Brain microvascular endothelial cell (primary cell): ENCODE measurements at regions of chr9 and their contacts with region 1.

Region 1: GRCh38 chr9:14096258-14096922 is 217.6 kb downstream of the NFIB start:
- DNase-seq: peak; percentile 90
- H3K4me3 ChIP-seq: peak overlapping the region; percentile 12
- H3K27ac ChIP-seq: peak overlapping the region; percentile 94
- H3K27me3 ChIP-seq: no peaks in the 10 kb centered on the region
- CTCF ChIP-seq: peak; percentile 20

Region 2: GRCh38 chr9:14018081-14018480 is 78.3 kb before region 1 on chr9:
- in situ Hi-C with region 1: no loop called
- DNase-seq: peak; percentile 88
- H3K4me3 ChIP-seq: no peak overlapping the region
- H3K27ac ChIP-seq: no peak overlapping the region
- H3K27me3 ChIP-seq: no peaks in the 10 kb centered on the region
- CTCF ChIP-seq: no peak

Region 3: DNA sequence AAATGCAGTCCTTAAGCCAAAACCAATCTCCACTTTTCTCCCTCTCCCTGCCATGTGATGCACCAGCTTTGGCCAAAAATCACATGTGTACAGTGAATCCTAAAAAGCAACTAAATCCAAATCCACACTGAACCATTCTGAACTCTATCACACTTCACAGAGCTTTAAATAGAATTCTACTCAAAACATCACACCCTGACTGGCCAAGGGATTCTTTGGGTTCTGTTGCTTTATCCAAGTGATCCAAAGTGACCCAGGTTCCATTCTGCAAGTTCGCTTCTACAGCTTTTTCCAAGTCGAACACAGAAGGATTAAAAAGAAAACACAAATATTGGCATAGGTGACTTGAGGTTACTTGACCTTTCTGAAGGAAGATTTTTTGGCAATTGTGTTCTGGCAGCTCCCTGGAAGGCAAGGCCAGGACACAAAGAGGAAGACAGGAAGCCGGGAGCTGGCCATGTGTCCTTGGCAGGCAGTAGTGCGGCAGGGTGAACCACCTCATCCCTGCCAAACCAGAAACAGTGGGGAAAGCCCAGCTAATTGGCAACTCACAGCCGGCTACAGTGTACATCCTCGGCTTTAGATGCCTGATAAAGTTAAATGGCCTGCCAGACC is 102.6 kb after region 1 on chr9:
- in situ Hi-C with region 1: loop called (anchors 25 kb)
- DNase-seq: peak; percentile 63
- H3K4me3 ChIP-seq: no peak overlapping the region
- H3K27ac ChIP-seq: no peak overlapping the region
- H3K27me3 ChIP-seq: no peaks in the 10 kb centered on the region
- CTCF ChIP-seq: no peak

Region 4: DNA sequence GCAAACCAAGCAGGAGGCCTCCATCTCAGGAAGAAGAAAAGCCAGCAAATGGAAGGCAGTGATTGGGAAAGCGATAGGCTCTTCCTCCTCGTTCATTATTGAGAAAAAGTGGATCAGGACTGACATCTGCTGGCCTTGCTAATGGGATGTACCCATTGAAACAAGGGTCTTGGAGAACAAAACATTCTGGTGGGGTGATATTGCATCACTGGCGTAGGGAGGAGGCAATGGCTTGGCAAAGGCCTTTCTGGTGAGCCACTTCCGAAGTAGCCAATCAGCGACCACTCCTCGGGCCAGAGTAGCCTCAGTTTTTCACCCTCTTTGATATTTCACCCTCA is 304.2 kb after region 1 on chr9:
- in situ Hi-C with region 1: no loop called
- DNase-seq: peak; percentile 75
- H3K4me3 ChIP-seq: no peak overlapping the region
- H3K27ac ChIP-seq: no peak overlapping the region
- H3K27me3 ChIP-seq: no peaks in the 10 kb centered on the region
- CTCF ChIP-seq: peak; percentile 69